ENCODE measurements at regions of chr5 and their contacts with region 1.

Region 1: DNA sequence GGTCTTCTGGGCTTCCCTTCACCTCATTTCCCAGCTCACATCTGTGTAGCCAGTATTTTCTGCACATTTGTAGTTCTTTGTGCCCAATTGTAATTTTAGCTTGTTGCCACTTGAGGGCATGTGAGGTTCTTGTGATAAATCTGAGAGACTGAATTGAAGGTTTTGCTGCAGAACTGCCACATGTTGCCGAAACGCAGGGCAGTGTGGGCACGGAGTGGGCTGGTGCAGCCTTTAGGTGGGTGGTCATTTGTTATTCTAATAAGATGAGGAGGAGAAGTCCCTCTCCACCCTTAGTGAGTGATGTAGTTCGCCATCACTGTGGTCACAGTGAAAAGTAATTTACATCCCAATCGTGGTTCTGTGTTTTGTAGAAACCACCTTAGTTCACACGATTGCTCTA is 21.2 kb downstream of the OTULIN start:
- DNase-seq: peak; percentile 64
- ATAC-seq: peak; percentile 87
- H3K4me3 Mint-ChIP-seq: no peak overlapping the region
- H3K27ac Mint-ChIP-seq: no peak overlapping the region
- H3K4me1 Mint-ChIP-seq: peaks cover 10% of the 10 kb centered on the region
- H3K27me3 Mint-ChIP-seq: no peaks in the 10 kb centered on the region

Region 2: DNA sequence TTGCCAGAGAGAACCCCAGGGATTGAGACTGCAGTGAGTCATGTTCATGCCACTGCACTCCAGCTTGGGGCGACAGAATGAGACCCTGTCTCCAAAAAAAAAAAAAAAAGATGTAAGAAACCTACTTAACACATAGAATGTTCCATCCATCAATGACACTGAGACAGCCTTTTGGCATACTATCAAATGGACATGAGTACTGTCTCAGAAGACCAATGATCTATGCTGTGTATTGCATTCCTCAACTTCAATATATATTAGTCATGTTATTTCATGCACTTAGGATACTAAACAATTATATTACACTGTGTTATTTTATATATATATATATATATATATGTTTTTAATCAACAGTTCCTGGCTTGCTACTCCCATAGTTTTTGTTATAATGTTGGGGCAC is 242.9 kb after region 1 on chr5:
- CTCF ChIA-PET with region 1: no interaction called
- POLR2A ChIA-PET with region 1: no interaction called
- intact Hi-C with region 1: no loop called
- DNase-seq: no peak
- ATAC-seq: no peak
- H3K4me3 Mint-ChIP-seq: no peak overlapping the region
- H3K27ac Mint-ChIP-seq: no peak overlapping the region
- H3K4me1 Mint-ChIP-seq: peaks cover 55% of the 10 kb centered on the region
- H3K27me3 Mint-ChIP-seq: no peaks in the 10 kb centered on the region

Region 3: GRCh38 chr5:15013654-15014463 is 328.1 kb after region 1 on chr5:
- CTCF ChIA-PET with region 1: interaction called, 4 read pairs
- POLR2A ChIA-PET with region 1: no interaction called
- intact Hi-C with region 1: loop called in 1 of 2 experiments (anchors 1 kb)
- DNase-seq: no peak
- ATAC-seq: no peak
- H3K4me3 Mint-ChIP-seq: no peak overlapping the region
- H3K27ac Mint-ChIP-seq: no peak overlapping the region
- H3K4me1 Mint-ChIP-seq: no peaks in the 10 kb centered on the region
- H3K27me3 Mint-ChIP-seq: no peaks in the 10 kb centered on the region

Measured in activated CD4-positive, alpha-beta T cell treated with anti-CD3 and anti-CD28 coated beads for 36 hours (primary cell).